ENCODE measurements at regions of chr18 and their contacts with region 1.

Region 1: DNA sequence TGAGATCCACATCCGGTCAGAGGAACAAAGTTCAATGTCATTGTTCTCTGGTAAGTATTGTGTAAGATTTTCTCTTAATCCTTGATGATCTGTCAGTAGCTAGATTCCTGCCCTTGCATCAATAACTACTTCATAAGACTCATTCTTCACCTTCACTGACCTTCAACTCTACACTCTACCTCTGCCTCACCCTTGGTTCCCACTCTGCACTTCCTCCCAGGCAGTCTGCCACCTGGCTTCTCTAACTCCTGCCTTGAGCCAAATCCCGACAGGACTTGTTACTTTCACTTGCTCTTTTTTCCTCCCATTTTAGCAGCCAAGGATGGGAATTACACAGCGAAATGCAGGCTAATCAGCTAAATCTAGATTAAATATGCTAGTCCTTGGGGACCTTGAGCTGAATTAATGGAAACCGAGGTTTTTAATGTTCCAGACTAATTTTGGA is 190.7 kb downstream of the DLGAP1 start:
- DNase-seq: no peak
- ATAC-seq: peak; percentile 4; the same call in 2 of the 3 replicates
- H3K4me3 ChIP-seq: no peak overlapping the region
- H3K27ac ChIP-seq: no peak overlapping the region; the same call in 1 of the 2 replicates
- H3K4me1 ChIP-seq: no peaks in the 10 kb centered on the region
- H3K27me3 ChIP-seq: no peaks in the 10 kb centered on the region
- CTCF ChIP-seq: no peak
- EP300 ChIP-seq: no peak
- POLR2A ChIP-seq: no peak
- RAD21 ChIP-seq: no peak

Region 2: GRCh38 chr18:3261371-3262246 is 1002.8 kb before region 1 on chr18 and contains the start of gene MYL12B:
- CTCF ChIA-PET with region 1: no interaction called
- POLR2A ChIA-PET with region 1: no interaction called
- RAD21 ChIA-PET with region 1: no interaction called
- SMC1A ChIA-PET with region 1: no interaction called
- in situ Hi-C with region 1: loop called (anchors 25 kb)
- intact Hi-C with region 1: no loop called
- DNase-seq: no peak
- ATAC-seq: peak; percentile 80
- H3K4me3 ChIP-seq: peak within 1 kb of the TSS; percentile 84
- H3K27ac ChIP-seq: peak within 1 kb of the TSS; percentile 91
- H3K4me1 ChIP-seq: peaks cover 14% of the 10 kb centered on the region
- H3K27me3 ChIP-seq: no peaks in the 10 kb centered on the region
- CTCF ChIP-seq: no peak
- EP300 ChIP-seq: no peak
- POLR2A ChIP-seq: peak; percentile 95
- RAD21 ChIP-seq: no peak
- polyA plus RNA-seq, gene MYL12B: 662 to 739 TPM

Region 3: GRCh38 chr18:4236940-4237663 is 27.3 kb before region 1 on chr18:
- CTCF ChIA-PET with region 1: interaction called, 8 read pairs
- POLR2A ChIA-PET with region 1: interaction called, 8 read pairs
- RAD21 ChIA-PET with region 1: interaction called, 13 read pairs
- SMC1A ChIA-PET with region 1: interaction called, 48 read pairs
- in situ Hi-C with region 1: no loop called
- intact Hi-C with region 1: no loop called
- DNase-seq: no peak
- ATAC-seq: peak; percentile 77
- H3K4me3 ChIP-seq: no peak overlapping the region
- H3K27ac ChIP-seq: no peak overlapping the region
- H3K4me1 ChIP-seq: no peaks in the 10 kb centered on the region
- H3K27me3 ChIP-seq: no peaks in the 10 kb centered on the region
- CTCF ChIP-seq: no peak
- EP300 ChIP-seq: peak; percentile 28 to 41; a peak in 1 of 4 replicates
- POLR2A ChIP-seq: no peak
- RAD21 ChIP-seq: no peak

Region 4: GRCh38 chr18:4276953-4277585 is 12.7 kb after region 1 on chr18:
- CTCF ChIA-PET with region 1: interaction called, 24 read pairs
- POLR2A ChIA-PET with region 1: interaction called, 13 read pairs
- RAD21 ChIA-PET with region 1: interaction called, 13 read pairs
- SMC1A ChIA-PET with region 1: interaction called, 26 read pairs
- in situ Hi-C with region 1: no loop called
- intact Hi-C with region 1: no loop called
- DNase-seq: no peak
- ATAC-seq: peak; percentile 85
- H3K4me3 ChIP-seq: no peak overlapping the region
- H3K27ac ChIP-seq: no peak overlapping the region
- H3K4me1 ChIP-seq: no peaks in the 10 kb centered on the region
- H3K27me3 ChIP-seq: no peaks in the 10 kb centered on the region
- CTCF ChIP-seq: no peak
- EP300 ChIP-seq: peak; percentile 90 to 94; a peak in 3 of 4 replicates
- POLR2A ChIP-seq: no peak
- RAD21 ChIP-seq: no peak

Region 5: GRCh38 chr18:4450065-4450658 is 185.8 kb after region 1 on chr18:
- CTCF ChIA-PET with region 1: no interaction called
- POLR2A ChIA-PET with region 1: interaction called, 4 read pairs
- RAD21 ChIA-PET with region 1: interaction called, 12 read pairs
- SMC1A ChIA-PET with region 1: interaction called, 30 read pairs
- in situ Hi-C with region 1: no loop called
- intact Hi-C with region 1: no loop called
- DNase-seq: no peak
- ATAC-seq: peak; percentile 13
- H3K4me3 ChIP-seq: no peak overlapping the region
- H3K27ac ChIP-seq: no peak overlapping the region
- H3K4me1 ChIP-seq: no peaks in the 10 kb centered on the region
- H3K27me3 ChIP-seq: no peaks in the 10 kb centered on the region
- CTCF ChIP-seq: peak in 2 of 3 experiments; percentile 4 to 43; a peak in 2 of 6 replicates
- EP300 ChIP-seq: no peak
- POLR2A ChIP-seq: no peak
- RAD21 ChIP-seq: no peak